Activated CD4-positive, alpha-beta T cell treated with anti-CD3 and anti-CD28 coated beads, Interleukin-2, amount 10 ng/mL, durations not matched to agents 24 days and 14 days (primary cell): ENCODE measurements at regions of chr11 and their contacts with region 1.

Region 1: DNA sequence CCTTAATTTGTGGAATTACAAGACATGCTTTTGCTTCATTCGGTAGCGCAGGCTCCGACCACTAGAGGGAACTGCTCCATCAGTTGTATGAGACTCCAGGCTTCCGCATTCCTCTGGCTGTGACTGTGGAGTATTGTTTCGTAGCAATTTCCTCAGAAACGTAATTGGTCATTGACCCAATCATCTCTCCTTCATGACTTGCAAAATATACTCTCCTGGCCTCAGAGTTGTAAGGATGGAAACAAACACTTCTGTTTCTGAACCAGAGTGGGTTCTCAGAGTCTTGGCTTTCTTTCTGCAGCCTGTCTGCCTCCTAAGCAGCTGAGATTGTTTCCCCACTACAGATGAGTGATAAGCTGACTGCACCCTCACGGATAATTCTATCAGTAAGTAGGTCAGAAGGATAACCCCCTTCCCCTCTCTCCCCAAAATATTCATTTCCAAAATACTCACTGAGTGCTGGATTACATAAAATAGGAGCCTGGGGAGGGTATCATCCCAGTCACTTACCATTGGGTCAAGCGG is 146.8 kb upstream of the ZC3H12C start:
- DNase-seq: peak; percentile 89
- H3K4me3 Mint-ChIP-seq: peak overlapping the region; percentile 34
- H3K27ac Mint-ChIP-seq: peak overlapping the region; percentile 17
- H3K4me1 Mint-ChIP-seq: peaks cover 10% of the 10 kb centered on the region
- H3K27me3 Mint-ChIP-seq: peaks cover 17% of the 10 kb centered on the region

Region 2: DNA sequence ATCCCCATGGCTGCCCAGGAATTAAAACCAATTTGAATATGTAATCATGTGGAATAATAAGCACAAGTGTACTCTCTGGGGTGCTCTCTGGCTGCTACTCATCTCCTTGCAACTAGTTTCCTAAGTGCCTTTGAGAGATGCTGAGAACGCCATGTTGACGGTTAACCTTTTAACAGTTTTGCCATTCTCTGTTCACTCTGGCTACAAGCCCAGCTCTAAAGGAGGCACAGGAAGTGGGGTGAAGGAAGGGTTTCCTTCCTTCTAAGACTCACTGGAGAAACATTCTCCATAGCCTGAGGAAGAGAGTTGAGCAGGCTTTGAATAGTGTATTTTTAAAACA is 24.8 kb after region 1 on chr11:
- intact Hi-C with region 1: loop called (anchors 2 kb)
- DNase-seq: peak; percentile 65
- H3K4me3 Mint-ChIP-seq: peak overlapping the region; percentile 72
- H3K27ac Mint-ChIP-seq: peak overlapping the region; percentile 86
- H3K4me1 Mint-ChIP-seq: peaks cover 35% of the 10 kb centered on the region
- H3K27me3 Mint-ChIP-seq: peaks cover 12% of the 10 kb centered on the region

Region 3: DNA sequence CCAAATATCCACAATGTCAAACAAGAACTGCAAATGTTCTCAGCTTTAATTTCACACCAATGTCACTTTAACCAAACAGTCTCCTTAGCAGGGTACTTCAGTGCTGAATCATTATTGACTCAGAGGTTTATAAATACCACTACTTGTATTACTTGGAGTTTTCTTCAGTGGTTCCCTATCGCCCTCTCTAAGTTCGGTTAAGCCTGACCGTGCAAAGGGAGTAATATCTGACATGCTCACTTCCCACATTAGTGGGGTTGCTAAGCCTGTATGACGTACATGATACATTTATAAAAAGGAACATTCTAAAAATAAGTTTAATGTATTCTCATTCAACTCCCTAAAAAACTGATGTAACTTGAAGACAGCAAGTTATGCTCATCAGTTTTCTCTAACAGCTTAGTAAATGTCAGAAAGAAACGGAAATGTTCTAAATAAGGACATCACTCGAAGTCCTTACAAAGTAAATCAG is 53.7 kb after region 1 on chr11:
- intact Hi-C with region 1: loop called (anchors 5 kb)
- DNase-seq: no peak
- H3K4me3 Mint-ChIP-seq: no peak overlapping the region
- H3K27ac Mint-ChIP-seq: no peak overlapping the region
- H3K4me1 Mint-ChIP-seq: no peaks in the 10 kb centered on the region
- H3K27me3 Mint-ChIP-seq: peaks cover 6% of the 10 kb centered on the region

Region 4: DNA sequence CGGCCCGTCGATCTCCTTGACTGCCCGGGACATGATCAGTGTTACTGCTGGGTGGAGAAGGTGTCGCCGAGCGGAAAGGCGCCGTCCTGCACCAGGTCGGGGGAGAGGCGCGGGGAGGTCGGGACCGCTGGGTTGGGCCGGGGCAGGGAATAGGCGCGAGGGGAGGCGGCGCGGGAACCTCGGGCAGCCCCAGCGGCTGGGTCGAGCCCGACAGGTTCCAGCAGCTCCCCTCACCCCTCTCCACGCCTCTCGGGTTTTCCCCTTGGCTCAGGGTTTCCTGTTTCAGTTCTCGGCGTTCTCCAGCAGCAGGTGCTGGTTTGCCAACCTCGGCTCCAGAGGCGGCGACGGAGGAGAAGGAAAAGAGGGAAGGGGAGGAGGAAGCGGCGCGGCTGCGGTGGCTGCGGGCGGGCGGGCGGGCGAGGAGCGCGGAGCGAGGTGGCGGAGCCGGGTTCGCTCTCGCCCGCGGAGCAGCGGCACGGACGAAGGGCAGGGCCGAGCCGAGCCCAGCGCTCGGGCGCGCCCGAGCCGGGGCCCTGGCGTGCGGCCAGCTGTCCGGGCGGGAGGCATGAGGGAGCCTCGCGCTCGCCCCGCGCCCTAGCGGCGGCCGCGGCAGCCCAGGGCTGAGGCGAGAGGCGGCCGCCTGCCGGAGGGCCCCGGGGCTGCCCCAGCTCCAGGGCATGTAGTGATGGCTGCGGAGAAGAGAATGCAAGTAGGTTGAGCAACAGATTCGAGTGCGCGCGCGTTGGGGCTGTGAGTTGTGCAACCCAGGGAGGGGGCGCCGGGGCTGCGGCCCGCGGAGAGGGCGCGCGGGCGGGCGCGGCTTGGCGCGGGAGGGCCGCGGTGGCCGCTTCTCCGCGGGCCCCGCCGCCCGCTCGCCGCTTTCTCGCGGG is 146.4 kb after region 1 on chr11 and contains the start of gene ZC3H12C:
- intact Hi-C with region 1: loop called (anchors 1 kb)
- DNase-seq: peak; percentile 86
- H3K4me3 Mint-ChIP-seq: peak within 1 kb of the TSS; percentile 88
- H3K27ac Mint-ChIP-seq: peak within 1 kb of the TSS; percentile 95
- H3K4me1 Mint-ChIP-seq: peaks cover 18% of the 10 kb centered on the region
- H3K27me3 Mint-ChIP-seq: peaks cover 53% of the 10 kb centered on the region
- total RNA-seq, gene ZC3H12C: 6.7 and 7.5 TPM in 2 replicates

Region 5: DNA sequence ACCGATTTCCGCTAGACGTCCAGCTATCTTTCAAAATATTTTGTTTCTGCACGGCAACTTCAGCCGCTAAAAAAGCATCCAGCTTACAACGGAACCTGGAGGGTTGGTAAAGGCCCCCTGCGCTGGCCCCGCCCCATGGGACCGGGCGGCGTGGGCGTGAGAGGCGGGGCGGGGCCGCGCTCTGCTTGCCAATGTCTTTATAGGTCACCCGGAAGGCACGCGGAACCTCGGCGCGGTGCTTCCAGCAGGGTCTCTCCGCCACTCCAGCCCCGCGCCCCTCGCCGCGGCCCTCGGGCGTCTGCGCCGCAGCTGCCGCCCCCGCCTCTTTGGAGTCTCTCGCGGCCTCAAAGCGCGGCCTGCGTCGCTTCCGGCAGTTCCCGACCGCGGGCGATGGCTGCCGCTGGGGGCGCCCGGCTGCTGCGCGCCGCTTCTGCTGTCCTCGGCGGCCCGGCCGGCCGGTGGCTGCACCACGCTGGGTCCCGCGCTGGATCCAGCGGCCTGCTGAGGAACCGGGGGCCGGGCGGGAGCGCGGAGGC is 483.4 kb after region 1 on chr11 and contains the start of gene FDX1:
- intact Hi-C with region 1: loop called (anchors 5 kb)
- DNase-seq: peak; percentile 95
- H3K4me3 Mint-ChIP-seq: peak within 1 kb of the TSS; percentile 99
- H3K27ac Mint-ChIP-seq: peak within 1 kb of the TSS; percentile 98
- H3K4me1 Mint-ChIP-seq: peaks cover 39% of the 10 kb centered on the region
- H3K27me3 Mint-ChIP-seq: no peaks in the 10 kb centered on the region
- total RNA-seq, gene FDX1: 14.2 and 16.4 TPM in 2 replicates